ENCODE measurements at regions of chr13 and their contacts with region 1.

Region 1: DNA sequence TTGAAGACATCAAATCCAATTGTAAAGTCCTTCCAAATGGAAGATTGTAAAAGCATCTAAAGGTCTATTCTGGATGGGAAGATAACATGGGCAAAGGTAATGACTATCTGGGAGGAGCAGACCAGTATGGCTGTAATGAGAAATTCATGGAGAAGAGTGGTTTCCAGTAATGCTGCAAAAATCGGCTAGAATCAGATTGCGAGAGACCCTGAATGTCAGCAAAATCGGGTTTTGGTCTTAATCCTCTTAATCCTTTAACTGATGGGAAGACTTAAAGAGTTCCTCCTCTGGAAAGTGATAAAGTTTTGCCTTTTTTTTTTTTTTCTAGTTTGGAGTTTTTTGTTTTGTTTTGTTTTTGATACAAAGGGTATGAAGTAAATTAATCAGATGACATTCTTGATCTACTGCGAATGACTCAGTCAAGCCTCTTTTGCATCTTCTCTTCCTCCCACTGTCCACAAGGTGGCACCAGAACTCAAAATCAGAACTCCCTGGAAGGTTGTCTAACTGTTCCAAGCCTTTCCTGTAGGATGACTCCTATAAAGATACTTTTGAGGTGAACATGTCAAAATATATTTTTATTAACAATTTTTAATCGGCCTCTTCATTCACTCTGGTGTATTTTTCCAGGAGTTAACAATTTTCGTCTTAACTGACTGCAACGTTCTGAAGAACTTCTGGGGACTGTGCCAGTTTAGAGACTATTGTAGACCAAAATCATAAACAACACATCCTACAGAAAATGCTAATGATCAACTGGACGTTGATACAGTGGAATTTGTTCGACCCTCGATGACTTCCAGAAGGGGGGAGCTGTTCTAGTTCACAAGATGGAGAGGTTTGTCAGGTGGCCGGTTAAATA is 213.3 kb upstream of the MIR17HG start:
- DNase-seq: peak; percentile 74
- H3K4me3 ChIP-seq: no peak overlapping the region
- H3K27ac ChIP-seq: no peak overlapping the region
- H3K4me1 ChIP-seq: no peaks in the 10 kb centered on the region
- H3K27me3 ChIP-seq: peaks cover 22% of the 10 kb centered on the region
- CTCF ChIP-seq: peak; percentile 78

Region 2: DNA sequence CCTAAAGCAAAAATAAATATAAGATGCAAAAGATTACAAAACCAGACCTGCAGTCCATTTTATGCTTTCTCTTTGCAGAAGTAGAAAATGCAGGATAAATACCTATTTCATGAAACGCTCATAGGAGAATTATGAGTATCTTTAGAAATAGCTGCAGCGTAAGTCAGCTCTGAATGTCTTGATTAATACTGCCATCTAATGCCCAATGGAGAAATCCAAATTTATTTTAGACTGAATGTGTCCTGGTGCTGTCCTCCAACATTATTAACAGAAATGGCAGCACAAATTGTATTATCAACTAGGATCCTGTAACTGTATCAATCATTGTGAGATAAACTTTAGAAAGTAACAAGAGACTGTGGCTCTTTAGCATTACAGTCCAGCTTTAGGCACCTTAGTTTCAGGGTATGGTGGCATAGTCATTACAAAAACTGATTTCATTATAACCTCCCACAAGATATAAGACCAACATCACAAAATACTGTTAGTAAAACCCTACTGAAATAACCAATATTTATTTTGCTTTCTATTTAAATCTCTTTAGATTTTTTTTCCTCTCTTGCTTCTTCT is 51.2 kb after region 1 on chr13:
- CTCF ChIA-PET with region 1: no interaction called
- POLR2A ChIA-PET with region 1: no interaction called
- intact Hi-C with region 1: loop called (anchors 1 kb)
- DNase-seq: peak; percentile 31
- H3K4me3 ChIP-seq: no peak overlapping the region
- H3K27ac ChIP-seq: no peak overlapping the region
- H3K4me1 ChIP-seq: no peaks in the 10 kb centered on the region
- H3K27me3 ChIP-seq: peaks cover 83% of the 10 kb centered on the region
- CTCF ChIP-seq: peak; percentile 54

Region 3: DNA sequence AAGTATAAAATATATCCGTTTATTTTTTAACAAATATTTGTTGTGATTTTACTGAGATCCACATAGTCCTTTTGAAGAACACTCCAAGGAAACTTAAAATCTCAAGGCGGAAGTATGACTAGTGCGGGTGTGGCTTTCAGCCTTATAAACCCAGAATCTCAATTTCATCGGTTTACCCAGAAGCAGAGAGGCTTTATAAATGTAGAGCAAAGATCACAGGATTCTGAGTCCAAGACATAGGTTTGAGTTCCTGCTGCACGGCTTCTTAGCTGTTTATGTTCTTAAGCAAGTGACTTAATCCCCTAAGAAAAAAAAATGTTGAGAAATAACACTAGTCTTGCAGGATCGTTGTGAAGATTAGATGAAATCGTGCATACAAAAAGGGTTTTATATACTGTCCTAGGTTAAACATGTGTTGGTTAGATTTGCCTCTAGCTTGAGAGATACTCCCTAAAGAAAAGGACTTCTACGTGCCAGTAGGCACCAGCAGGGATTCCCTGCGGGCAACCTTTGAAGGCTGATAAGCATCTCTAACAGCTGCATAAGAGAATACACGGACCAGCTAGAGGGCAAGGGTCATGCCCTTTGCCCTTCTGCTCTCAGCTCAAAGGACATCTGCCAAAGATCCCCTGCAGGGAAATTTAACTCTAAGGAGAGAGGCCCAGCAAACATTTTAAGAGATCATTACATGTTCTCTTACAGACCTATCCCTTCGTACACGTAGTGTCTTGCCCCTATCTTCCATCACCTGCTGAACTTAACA is 82.9 kb after region 1 on chr13:
- CTCF ChIA-PET with region 1: no interaction called
- POLR2A ChIA-PET with region 1: no interaction called
- intact Hi-C with region 1: no loop called
- DNase-seq: no peak
- H3K4me3 ChIP-seq: no peak overlapping the region
- H3K27ac ChIP-seq: no peak overlapping the region
- H3K4me1 ChIP-seq: no peaks in the 10 kb centered on the region
- H3K27me3 ChIP-seq: peaks cover 92% of the 10 kb centered on the region
- CTCF ChIP-seq: no peak

Region 4: DNA sequence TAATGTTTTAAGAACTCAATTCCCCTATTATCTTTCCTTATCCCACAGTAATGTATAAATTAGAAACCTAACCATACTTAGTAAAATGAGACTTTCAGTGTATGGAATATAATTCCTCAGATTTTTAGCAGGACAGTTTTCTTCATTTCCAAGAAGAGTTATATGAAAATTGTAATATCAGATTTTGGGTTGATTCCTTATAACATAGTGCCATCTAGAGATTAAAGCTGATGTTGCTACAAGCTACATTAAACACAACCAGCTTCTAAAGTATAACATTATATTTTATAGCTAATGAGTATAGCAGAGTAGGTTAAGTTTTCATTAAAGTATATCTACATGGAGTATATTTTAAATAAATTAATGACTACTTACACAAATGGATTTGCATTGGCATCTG is 113.6 kb after region 1 on chr13:
- CTCF ChIA-PET with region 1: no interaction called
- POLR2A ChIA-PET with region 1: no interaction called
- intact Hi-C with region 1: loop called (anchors 2 kb)
- DNase-seq: peak; percentile 6
- H3K4me3 ChIP-seq: no peak overlapping the region
- H3K27ac ChIP-seq: no peak overlapping the region
- H3K4me1 ChIP-seq: no peaks in the 10 kb centered on the region
- H3K27me3 ChIP-seq: peaks cover 94% of the 10 kb centered on the region
- CTCF ChIP-seq: peak; percentile 53; the same call in 1 of the 2 replicates

Region 5: DNA sequence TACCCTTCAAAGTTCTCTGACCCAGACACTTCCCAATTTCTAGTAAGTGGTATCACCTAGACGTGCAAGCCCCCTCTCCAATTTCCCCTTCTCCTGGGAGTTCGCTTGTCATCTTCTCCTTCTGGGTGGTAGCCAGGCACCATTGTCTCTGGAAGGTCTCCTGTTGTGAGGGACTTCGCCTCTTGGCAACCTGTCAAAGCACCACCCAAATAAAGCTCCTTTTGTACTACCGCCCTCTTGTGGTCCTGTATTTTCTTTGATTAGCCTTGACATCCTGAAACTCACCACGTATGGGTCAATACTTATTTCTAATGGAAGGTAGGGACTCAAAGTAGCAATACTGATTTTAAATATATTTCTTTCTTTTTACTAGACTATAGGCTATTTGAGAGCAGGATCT is 272.4 kb after region 1 on chr13:
- CTCF ChIA-PET with region 1: no interaction called
- POLR2A ChIA-PET with region 1: no interaction called
- intact Hi-C with region 1: loop called (anchors 5 kb)
- DNase-seq: peak; percentile 85
- H3K4me3 ChIP-seq: no peak overlapping the region
- H3K27ac ChIP-seq: no peak overlapping the region
- H3K4me1 ChIP-seq: no peaks in the 10 kb centered on the region
- H3K27me3 ChIP-seq: peaks cover 13% of the 10 kb centered on the region
- CTCF ChIP-seq: peak; percentile 73